ENCODE measurements at regions of chr1 and their contacts with region 1.

Region 1: GRCh38 chr1:180188091-180188506 is 33.4 kb downstream of the QSOX1 start:
- DNase-seq: peak; percentile 87
- H3K4me3 ChIP-seq: peak overlapping the region in 1 of 2 experiments; percentile 40; a peak in 1 of 4 replicates
- H3K27ac ChIP-seq: no peak overlapping the region
- H3K4me1 ChIP-seq: no peaks in the 10 kb centered on the region; a peak in 1 of 4 replicates
- H3K27me3 ChIP-seq: no peaks in the 10 kb centered on the region
- CTCF ChIP-seq: peak; percentile 73
- EP300 ChIP-seq: no peak
- RAD21 ChIP-seq: peak; percentile 87

Region 2: GRCh38 chr1:180168786-180169639 is 19.1 kb before region 1 on chr1:
- CTCF ChIA-PET with region 1: interaction called, 12 read pairs
- POLR2A ChIA-PET with region 1: no interaction called
- DNase-seq: peak; percentile 78
- H3K4me3 ChIP-seq: no peak overlapping the region
- H3K27ac ChIP-seq: no peak overlapping the region
- H3K4me1 ChIP-seq: peaks cover 14 to 38% of the 10 kb centered on the region in 2 experiments; a peak in 3 of 4 replicates
- H3K27me3 ChIP-seq: no peaks in the 10 kb centered on the region
- CTCF ChIP-seq: peak; percentile 68
- EP300 ChIP-seq: no peak
- RAD21 ChIP-seq: peak; percentile 56

Region 3: DNA sequence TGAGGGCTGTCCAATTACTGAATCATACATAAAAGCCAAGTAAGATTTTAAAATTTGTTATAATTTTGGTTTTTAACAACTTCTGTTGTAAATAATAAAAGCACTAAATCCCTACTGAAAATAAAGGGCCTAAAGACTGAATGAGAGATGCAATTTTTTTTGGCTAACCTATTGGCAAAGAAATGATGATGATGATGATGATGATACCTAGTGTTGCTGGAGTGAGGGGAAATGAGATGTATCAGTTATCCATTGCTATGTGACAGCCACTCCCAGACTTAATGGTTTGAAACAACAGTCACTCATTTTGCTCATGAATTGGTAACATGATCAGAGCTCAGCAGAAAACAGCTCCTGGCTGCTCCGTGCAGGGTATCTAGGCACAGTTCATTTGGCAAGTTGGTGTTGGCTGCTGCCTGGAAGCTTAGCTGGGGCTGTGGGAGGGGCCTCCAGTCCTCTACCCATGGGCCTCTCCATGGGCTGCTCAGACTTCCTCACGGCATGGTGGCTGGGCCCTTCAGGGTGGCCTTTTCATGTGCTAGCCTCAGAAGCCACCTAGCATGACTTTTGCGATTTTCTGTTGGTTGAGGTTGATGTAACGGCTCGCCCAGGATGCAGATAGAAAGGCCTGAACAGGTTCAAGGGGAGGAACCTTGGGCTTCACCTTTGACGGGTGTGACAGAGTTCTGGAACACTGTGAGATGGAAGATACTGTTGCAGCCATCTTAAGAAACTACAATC is 16.0 kb after region 1 on chr1:
- CTCF ChIA-PET with region 1: interaction called, 15 read pairs
- POLR2A ChIA-PET with region 1: no interaction called
- DNase-seq: no peak
- H3K4me3 ChIP-seq: no peak overlapping the region
- H3K27ac ChIP-seq: no peak overlapping the region
- H3K4me1 ChIP-seq: no peaks in the 10 kb centered on the region
- H3K27me3 ChIP-seq: no peaks in the 10 kb centered on the region
- CTCF ChIP-seq: no peak
- EP300 ChIP-seq: no peak
- RAD21 ChIP-seq: no peak

Region 4: DNA sequence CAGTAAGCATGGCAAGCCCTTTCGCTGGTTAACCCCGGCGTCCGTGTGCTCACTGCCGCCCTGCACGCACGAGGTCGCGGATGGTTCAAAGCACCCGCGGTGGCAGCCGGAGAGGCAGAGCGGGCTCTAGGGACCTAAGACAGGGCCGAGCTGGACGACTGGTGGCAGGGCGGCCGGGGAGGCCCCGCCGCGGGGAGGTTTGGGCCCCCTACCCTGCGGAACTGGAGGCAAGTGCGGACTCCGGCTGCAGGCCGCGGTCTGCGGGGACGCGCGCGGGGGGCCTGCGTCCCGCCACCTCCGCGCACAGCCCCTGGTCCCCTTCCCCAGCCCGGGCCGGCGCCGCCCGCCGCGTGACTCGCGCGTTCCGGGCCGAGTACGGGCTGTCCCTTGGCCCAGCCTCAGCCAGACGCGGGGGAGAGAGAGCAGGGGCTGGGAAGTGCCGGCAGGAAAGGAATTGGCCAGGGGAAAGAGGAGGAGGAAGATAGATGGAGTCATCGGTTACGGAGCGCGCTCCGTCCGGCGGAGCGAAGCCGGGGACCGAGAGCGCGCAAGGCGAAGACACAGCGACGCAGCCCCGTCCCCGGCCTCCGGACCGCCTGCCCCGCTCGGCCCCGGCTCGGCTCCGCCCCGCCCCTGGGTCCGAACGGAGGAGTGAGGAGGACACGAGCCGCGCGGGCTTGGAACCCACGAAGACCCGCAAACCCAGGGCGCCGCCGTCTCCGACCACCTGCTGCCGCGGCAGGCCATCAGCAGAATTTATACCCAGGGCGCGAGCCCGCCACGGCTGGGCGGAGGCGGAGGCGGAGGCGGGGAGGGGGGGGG is 41.3 kb after region 1 on chr1:
- CTCF ChIA-PET with region 1: interaction called, 17 read pairs
- POLR2A ChIA-PET with region 1: no interaction called
- DNase-seq: peak; percentile 89
- H3K4me3 ChIP-seq: peak overlapping the region; percentile 50 to 56
- H3K27ac ChIP-seq: no peak overlapping the region
- H3K4me1 ChIP-seq: peaks cover 0 to 19% of the 10 kb centered on the region in 2 experiments; a peak in 1 of 4 replicates
- H3K27me3 ChIP-seq: peaks cover 87% of the 10 kb centered on the region
- CTCF ChIP-seq: no peak
- EP300 ChIP-seq: no peak
- RAD21 ChIP-seq: no peak

Region 5: GRCh38 chr1:180415985-180416633 is 228.0 kb after region 1 on chr1:
- CTCF ChIA-PET with region 1: interaction called, 62 read pairs
- POLR2A ChIA-PET with region 1: no interaction called
- DNase-seq: peak; percentile 51
- H3K4me3 ChIP-seq: no peak overlapping the region; a peak in 1 of 4 replicates
- H3K27ac ChIP-seq: no peak overlapping the region
- H3K4me1 ChIP-seq: no peaks in the 10 kb centered on the region
- H3K27me3 ChIP-seq: no peaks in the 10 kb centered on the region
- CTCF ChIP-seq: peak; percentile 71
- EP300 ChIP-seq: no peak
- RAD21 ChIP-seq: peak; percentile 80

Measured in SK-N-SH (cell line).